ENCODE measurements at regions of chr11 and their contacts with region 1.

Region 1: DNA sequence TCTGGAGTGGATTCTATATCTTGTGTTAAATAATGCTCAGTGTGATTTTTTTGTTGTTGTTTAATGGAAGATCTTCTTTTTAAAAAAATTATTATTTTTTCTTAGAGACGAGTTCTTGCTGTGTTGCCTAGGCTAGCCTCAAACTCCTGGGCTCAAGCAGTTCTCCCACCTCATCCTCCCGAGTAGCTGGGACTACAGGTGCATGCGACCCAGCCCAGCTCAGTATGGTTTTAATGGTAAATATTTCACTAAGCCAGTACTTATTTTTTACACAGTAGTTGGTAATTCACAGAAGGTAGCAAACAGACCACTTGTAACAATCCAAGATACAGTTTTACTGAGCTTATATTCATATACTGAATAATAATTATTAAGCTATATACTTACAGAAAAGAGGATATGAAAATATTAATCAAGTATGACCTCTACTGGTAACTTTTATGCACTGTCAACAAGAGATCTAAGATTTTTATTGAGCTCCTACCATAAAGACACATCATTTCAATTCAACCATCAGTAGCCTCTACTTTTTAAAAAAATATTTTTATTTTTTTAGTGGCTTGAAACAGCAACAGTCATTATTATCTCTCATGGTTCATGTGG is 6.1 kb upstream of the CD59 start:
- DNase-seq: peak; percentile 62
- H3K4me3 ChIP-seq: no peak overlapping the region
- H3K27ac ChIP-seq: no peak overlapping the region
- H3K4me1 ChIP-seq: peaks cover 9% of the 10 kb centered on the region
- H3K27me3 ChIP-seq: no peaks in the 10 kb centered on the region
- CTCF ChIP-seq: peak; percentile 22 to 27
- POLR2A ChIP-seq: no peak

Region 2: DNA sequence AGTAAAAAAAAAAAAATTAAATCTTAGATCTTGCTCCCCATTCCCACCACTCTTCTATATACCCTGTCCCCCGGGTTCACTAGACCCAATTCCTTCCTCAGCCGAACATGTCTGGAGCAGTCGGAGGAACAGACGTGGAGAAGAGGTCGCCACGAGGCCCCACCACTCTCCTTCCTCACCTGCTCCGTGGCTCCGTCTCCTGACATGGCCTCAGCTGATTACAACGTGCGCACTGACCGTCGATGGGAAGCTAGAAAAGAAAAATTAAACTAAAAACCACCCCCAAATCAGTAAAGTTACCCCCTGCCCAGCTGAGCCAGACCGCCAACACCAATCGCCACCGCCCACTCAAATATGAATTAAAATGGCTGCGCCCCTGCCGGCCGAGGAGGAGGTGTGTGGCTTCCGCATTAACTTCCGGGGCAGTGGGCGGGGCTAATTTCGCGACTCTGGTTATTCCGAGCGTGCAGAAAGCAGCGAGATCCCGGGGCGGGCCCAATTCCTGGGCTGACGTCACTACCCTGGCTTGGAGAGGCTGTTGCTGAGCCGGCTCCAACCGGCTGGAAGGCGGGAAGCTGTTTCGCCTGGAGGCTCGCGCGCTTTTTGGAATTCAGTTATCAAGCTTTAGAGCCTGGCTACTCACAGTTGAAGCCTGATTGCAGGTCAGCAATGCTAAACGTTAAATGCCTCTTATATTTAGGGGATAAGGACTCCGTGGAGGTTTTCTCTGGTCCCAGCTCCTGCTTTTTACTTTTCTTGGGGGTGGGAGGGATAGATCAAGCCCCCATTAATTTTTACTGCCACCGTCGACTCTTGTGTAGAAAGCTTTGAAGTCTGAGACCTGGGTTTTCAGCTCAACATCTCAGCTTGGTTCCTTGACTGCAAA is 581.0 kb before region 1 on chr11 and contains the start of gene CSTF3:
- CTCF ChIA-PET with region 1: interaction called, 26 read pairs
- POLR2A ChIA-PET with region 1: no interaction called
- dilution Hi-C with region 1: no loop called
- intact Hi-C with region 1: loop called (anchors 5 kb)
- DNase-seq: peak; percentile 99
- H3K4me3 ChIP-seq: peak within 1 kb of the TSS; percentile 62 to 100 (median 100)
- H3K27ac ChIP-seq: peak within 1 kb of the TSS; percentile 92
- H3K4me1 ChIP-seq: peaks cover 23% of the 10 kb centered on the region
- H3K27me3 ChIP-seq: no peaks in the 10 kb centered on the region
- CTCF ChIP-seq: peak; percentile 18 to 38
- POLR2A ChIP-seq: peak; percentile 95
- total RNA-seq, gene CSTF3: 46.6 and 52.3 TPM in 2 replicates

Region 3: GRCh38 chr11:33542921-33543320 is 199.4 kb before region 1 on chr11:
- CTCF ChIA-PET with region 1: interaction called, 91 read pairs
- POLR2A ChIA-PET with region 1: no interaction called
- dilution Hi-C with region 1: no loop called
- intact Hi-C with region 1: loop called (anchors 1 kb)
- DNase-seq: peak; percentile 72
- H3K4me3 ChIP-seq: no peak overlapping the region
- H3K27ac ChIP-seq: no peak overlapping the region
- H3K4me1 ChIP-seq: no peaks in the 10 kb centered on the region
- H3K27me3 ChIP-seq: no peaks in the 10 kb centered on the region
- CTCF ChIP-seq: peak; percentile 74 to 79
- POLR2A ChIP-seq: no peak

Region 4: DNA sequence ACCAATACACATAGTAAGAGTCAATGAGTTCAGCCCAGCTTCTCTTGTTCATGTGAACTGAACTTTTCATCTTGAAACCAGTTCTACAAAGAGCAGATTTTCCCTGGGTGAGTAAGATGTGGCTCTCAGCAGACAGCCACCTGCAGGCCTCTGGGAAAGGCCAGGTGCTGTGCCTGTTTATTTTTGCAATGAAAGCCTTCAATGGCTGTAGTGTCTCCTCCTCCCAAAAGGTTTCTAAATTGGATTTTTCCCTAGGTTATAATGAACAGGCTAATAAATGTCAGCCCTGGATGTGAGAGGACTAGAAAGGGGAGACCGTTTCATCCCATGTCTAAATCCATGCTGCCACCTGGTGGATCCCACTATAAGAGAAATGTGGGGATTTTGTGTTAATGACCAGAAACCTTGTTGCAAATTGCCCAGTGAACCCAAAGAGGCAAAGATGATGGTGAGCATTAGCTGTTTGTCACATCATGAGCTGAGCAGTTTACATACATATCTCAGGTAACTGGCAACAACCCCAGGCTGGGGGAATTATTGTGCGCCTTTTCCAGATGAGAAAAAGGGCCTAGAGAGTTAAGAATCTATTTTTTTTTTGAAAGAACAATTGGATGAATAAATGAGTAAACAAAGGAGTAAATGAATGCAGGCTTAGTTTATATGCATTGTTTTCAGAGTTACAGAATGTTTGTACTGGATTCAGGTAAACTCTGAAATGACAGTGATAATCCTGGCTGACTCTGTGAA is 54.4 kb before region 1 on chr11:
- CTCF ChIA-PET with region 1: interaction called, 171 read pairs
- POLR2A ChIA-PET with region 1: interaction called, 4 read pairs
- dilution Hi-C with region 1: no loop called
- intact Hi-C with region 1: no loop called
- DNase-seq: peak; percentile 75
- H3K4me3 ChIP-seq: no peak overlapping the region
- H3K27ac ChIP-seq: no peak overlapping the region
- H3K4me1 ChIP-seq: peaks cover 44% of the 10 kb centered on the region
- H3K27me3 ChIP-seq: no peaks in the 10 kb centered on the region
- CTCF ChIP-seq: peak; percentile 51 to 74
- POLR2A ChIP-seq: no peak

Region 5: DNA sequence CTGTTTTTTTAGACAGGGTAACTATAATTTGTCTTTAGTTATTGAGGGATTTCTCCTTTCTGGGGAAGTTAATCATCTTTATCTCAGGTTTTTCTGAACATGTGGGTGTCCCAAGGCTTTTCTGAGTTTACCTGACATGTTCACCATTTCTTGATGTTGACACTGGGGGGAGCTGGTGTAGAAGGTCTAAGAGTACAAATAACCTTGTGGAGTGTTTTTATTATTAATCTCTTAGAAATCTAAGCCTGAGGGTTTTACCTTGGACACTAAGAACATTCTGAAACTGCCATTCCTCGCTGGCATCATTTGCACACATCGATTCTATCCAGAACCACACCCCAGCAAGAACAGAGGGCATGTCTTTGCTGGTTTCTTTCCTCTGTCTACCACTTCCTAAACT is 26.1 kb before region 1 on chr11:
- CTCF ChIA-PET with region 1: interaction called, 254 read pairs
- POLR2A ChIA-PET with region 1: interaction called, 7 read pairs
- dilution Hi-C with region 1: no loop called
- intact Hi-C with region 1: loop called (anchors 1 kb)
- DNase-seq: peak; percentile 66
- H3K4me3 ChIP-seq: no peak overlapping the region
- H3K27ac ChIP-seq: peak overlapping the region; percentile 0
- H3K4me1 ChIP-seq: peaks cover 29% of the 10 kb centered on the region
- H3K27me3 ChIP-seq: no peaks in the 10 kb centered on the region
- CTCF ChIP-seq: peak; percentile 27 to 41
- POLR2A ChIP-seq: no peak

Region 6: GRCh38 chr11:33761471-33761870 is 19.1 kb after region 1 on chr11:
- CTCF ChIA-PET with region 1: interaction called, 30 read pairs
- POLR2A ChIA-PET with region 1: no interaction called
- dilution Hi-C with region 1: no loop called
- intact Hi-C with region 1: no loop called
- DNase-seq: no peak
- H3K4me3 ChIP-seq: no peak overlapping the region
- H3K27ac ChIP-seq: no peak overlapping the region
- H3K4me1 ChIP-seq: no peaks in the 10 kb centered on the region
- H3K27me3 ChIP-seq: no peaks in the 10 kb centered on the region
- CTCF ChIP-seq: no peak
- POLR2A ChIP-seq: no peak

Region 7: DNA sequence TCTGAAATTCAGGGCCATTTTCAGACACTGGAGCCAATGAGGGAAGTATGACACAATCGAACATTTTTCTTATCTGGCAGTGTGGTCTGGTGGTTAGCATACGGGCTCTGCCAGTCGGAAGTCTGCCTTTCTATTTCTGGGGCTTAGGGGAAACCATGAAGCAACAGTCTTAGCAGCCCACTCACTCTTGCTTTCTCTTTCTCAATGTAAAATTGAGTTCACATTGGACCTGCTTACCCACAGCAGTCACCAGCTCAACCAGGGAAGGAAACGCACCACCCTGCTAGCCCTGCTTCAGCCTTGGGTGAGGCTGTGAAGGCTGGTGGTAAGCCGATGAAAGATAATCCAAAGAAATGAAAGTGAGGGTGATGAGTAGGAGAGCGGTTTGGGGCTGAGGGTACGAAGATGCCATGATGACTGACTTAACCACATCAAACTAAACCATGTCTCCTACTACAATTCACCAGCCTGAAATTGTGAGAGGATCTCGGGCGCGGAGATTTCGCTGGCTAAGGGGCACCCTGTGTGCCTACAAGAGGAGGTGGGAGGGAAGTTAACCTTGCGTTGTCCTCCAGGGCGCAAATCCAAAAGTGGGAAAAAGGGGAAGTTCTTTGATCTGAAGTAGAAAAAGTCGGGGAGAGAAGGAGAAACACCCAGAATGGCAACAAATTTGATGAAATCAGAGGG is 151.5 kb after region 1 on chr11:
- CTCF ChIA-PET with region 1: no interaction called
- POLR2A ChIA-PET with region 1: no interaction called
- dilution Hi-C with region 1: no loop called
- intact Hi-C with region 1: no loop called
- DNase-seq: no peak
- H3K4me3 ChIP-seq: no peak overlapping the region
- H3K27ac ChIP-seq: no peak overlapping the region
- H3K4me1 ChIP-seq: peaks cover 6% of the 10 kb centered on the region
- H3K27me3 ChIP-seq: peaks cover 0 to 5% of the 10 kb centered on the region in 2 experiments
- CTCF ChIP-seq: no peak
- POLR2A ChIP-seq: no peak